Heart left ventricle (tissue), 16 donors: ENCODE measurements at regions of chr6 and their contacts with region 1.

Region 1: GRCh38 chr6:13012977-13013680 is 296.6 kb downstream of the PHACTR1 start:
- DNase-seq: peak; percentile 39 to 76 (median 70)
- ATAC-seq: peak; percentile 19 to 62 (median 40)
- H3K4me3 ChIP-seq: peak overlapping the region; percentile 50 to 90 (median 69)
- H3K27ac ChIP-seq: peak overlapping the region in 11 of 12 donors; percentile 36 to 90 (median 81)
- H3K4me1 ChIP-seq: peaks cover 0 to 46% (median 17%) of the 10 kb centered on the region in 12 donors
- H3K27me3 ChIP-seq: peaks cover 0 to 29% (median 0%) of the 10 kb centered on the region in 9 donors
- CTCF ChIP-seq: no peak
- POLR2A ChIP-seq: no peak

Region 2: GRCh38 chr6:12957321-12958051 is 55.6 kb before region 1 on chr6:
- intact Hi-C with region 1: loop called in 8 of 10 experiments (anchors 2 to 5 kb)
- DNase-seq: peak; percentile 69 to 87 (median 78)
- ATAC-seq: peak; percentile 79 to 89 (median 86)
- H3K4me3 ChIP-seq: peak overlapping the region; percentile 40 to 79 (median 66)
- H3K27ac ChIP-seq: peak overlapping the region; percentile 1 to 91 (median 78)
- H3K4me1 ChIP-seq: peaks cover 0 to 38% (median 14%) of the 10 kb centered on the region in 12 donors
- H3K27me3 ChIP-seq: no peaks in the 10 kb centered on the region
- CTCF ChIP-seq: peak in 5 of 12 donors; percentile 19 to 50 (median 37)
- POLR2A ChIP-seq: no peak

Region 3: GRCh38 chr6:12962987-12963386 is 50.1 kb before region 1 on chr6:
- intact Hi-C with region 1: loop called in 7 of 10 experiments (anchors 2 to 5 kb)
- DNase-seq: no peak
- ATAC-seq: peak in 1 of 4 donors; percentile 59
- H3K4me3 ChIP-seq: peak overlapping the region in 10 of 12 donors; percentile 13 to 35 (median 27)
- H3K27ac ChIP-seq: peak overlapping the region; percentile 63 to 88 (median 75)
- H3K4me1 ChIP-seq: peaks cover 0 to 66% (median 26%) of the 10 kb centered on the region in 12 donors
- H3K27me3 ChIP-seq: no peaks in the 10 kb centered on the region
- CTCF ChIP-seq: no peak
- POLR2A ChIP-seq: no peak

Region 4: GRCh38 chr6:13079096-13079723 is 66.1 kb after region 1 on chr6:
- intact Hi-C with region 1: loop called in 1 of 10 experiments (anchors 10 kb)
- DNase-seq: no peak
- ATAC-seq: peak in 2 of 4 donors; percentile 52 to 56
- H3K4me3 ChIP-seq: no peak overlapping the region
- H3K27ac ChIP-seq: peak overlapping the region in 7 of 12 donors; percentile 1 to 61 (median 44)
- H3K4me1 ChIP-seq: peaks cover 3 to 68% (median 39%) of the 10 kb centered on the region in 12 donors
- H3K27me3 ChIP-seq: no peaks in the 10 kb centered on the region
- CTCF ChIP-seq: no peak
- POLR2A ChIP-seq: no peak

Region 5: GRCh38 chr6:13120483-13121482 is 107.7 kb after region 1 on chr6:
- intact Hi-C with region 1: loop called in 1 of 10 experiments (anchors 10 kb)
- DNase-seq: peak in 4 of 5 donors; percentile 41 to 76 (median 59)
- ATAC-seq: peak; percentile 84 to 96 (median 95)
- H3K4me3 ChIP-seq: no peak overlapping the region
- H3K27ac ChIP-seq: peak overlapping the region in 6 of 12 donors; percentile 2 to 64 (median 20)
- H3K4me1 ChIP-seq: peaks cover 0 to 27% (median 9%) of the 10 kb centered on the region in 12 donors
- H3K27me3 ChIP-seq: no peaks in the 10 kb centered on the region
- CTCF ChIP-seq: peak in 7 of 12 donors; percentile 12 to 46 (median 25)
- POLR2A ChIP-seq: no peak

Region 6: GRCh38 chr6:13302751-13303667 is 289.9 kb after region 1 on chr6:
- intact Hi-C with region 1: loop called in 1 of 10 experiments (anchors 10 kb)
- DNase-seq: peak in 4 of 5 donors; percentile 48 to 73 (median 60)
- ATAC-seq: peak; percentile 35 to 85 (median 78)
- H3K4me3 ChIP-seq: peak overlapping the region in 7 of 12 donors; percentile 4 to 39 (median 15)
- H3K27ac ChIP-seq: peak overlapping the region; percentile 17 to 88 (median 70)
- H3K4me1 ChIP-seq: peaks cover 0 to 36% (median 28%) of the 10 kb centered on the region in 12 donors
- H3K27me3 ChIP-seq: no peaks in the 10 kb centered on the region
- CTCF ChIP-seq: no peak
- POLR2A ChIP-seq: no peak

Region 7: DNA sequence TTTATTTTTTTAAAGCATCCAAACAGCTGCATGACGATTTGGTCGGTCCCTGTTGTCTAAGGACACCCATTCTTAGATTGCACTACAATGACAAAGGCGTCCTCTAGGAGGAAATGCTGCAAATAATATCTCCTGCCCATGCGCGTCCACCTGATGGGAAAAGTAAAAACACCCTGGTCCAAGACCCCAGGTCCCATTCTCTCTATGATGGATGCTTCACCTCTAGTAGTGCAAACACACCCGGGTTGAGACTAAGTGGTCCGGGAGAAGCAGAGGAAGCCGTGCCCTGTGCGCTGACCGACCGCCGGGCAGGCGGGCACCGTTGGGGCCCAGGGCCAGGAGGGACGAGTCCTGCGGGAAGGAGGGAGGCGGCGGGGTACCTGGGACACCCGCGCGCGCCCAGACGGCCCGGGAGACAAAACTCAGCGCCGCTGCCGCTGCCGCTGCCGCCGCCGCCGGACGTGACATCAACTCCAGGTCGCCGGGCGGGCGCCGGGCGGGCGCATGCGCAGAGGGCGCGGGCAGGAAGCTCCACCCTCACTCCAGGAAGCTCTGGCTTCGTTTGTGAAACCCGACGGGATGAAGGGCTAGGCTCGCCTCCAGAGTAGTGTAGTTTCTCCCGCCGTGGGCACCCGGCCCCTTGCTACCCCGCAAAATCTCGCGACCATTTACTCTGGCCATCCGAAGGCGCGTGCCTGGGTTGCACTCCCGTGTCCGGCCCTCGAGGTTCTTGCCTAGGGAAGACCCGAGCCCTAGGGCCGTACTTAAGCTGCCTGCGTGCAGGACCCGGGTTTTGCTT is 315.1 kb after region 1 on chr6 and contains the start of gene TBC1D7:
- intact Hi-C with region 1: loop called in 1 of 10 experiments (anchors 10 kb)
- DNase-seq: peak; percentile 92 to 97 (median 94)
- ATAC-seq: peak; percentile 72 to 97 (median 96)
- H3K4me3 ChIP-seq: peak within 1 kb of the TSS; percentile 53 to 94 (median 86)
- H3K27ac ChIP-seq: peak within 1 kb of the TSS; percentile 75 to 97 (median 94)
- H3K4me1 ChIP-seq: peaks cover 0 to 43% (median 18%) of the 10 kb centered on the region in 12 donors
- H3K27me3 ChIP-seq: no peaks in the 10 kb centered on the region
- CTCF ChIP-seq: peak in 4 of 12 donors; percentile 5 to 23 (median 12)
- POLR2A ChIP-seq: peak in 1 of 2 donors; percentile 93
- total RNA-seq, gene TBC1D7: 17.0 to 31.9 (median 22.9) TPM